ENCODE measurements at regions of chr13 and their contacts with region 1.

Region 1: GRCh38 chr13:77599351-77599750 is 63.8 kb downstream of the SCEL start:
- DNase-seq: no peak
- ATAC-seq: no peak
- H3K4me3 Mint-ChIP-seq: no peak overlapping the region
- H3K27ac Mint-ChIP-seq: no peak overlapping the region
- H3K4me1 Mint-ChIP-seq: no peaks in the 10 kb centered on the region
- H3K27me3 Mint-ChIP-seq: peaks cover 11% of the 10 kb centered on the region

Region 2: GRCh38 chr13:77751513-77752456 is 152.4 kb after region 1 on chr13:
- CTCF ChIA-PET with region 1: interaction called, 64 read pairs
- POLR2A ChIA-PET with region 1: no interaction called
- intact Hi-C with region 1: no loop called
- DNase-seq: peak; percentile 60
- ATAC-seq: peak; percentile 90
- H3K4me3 Mint-ChIP-seq: no peak overlapping the region
- H3K27ac Mint-ChIP-seq: peak overlapping the region; percentile 28
- H3K4me1 Mint-ChIP-seq: peaks cover 18% of the 10 kb centered on the region
- H3K27me3 Mint-ChIP-seq: no peaks in the 10 kb centered on the region

Region 3: GRCh38 chr13:78045916-78046315 is 446.6 kb after region 1 on chr13:
- CTCF ChIA-PET with region 1: no interaction called
- POLR2A ChIA-PET with region 1: no interaction called
- intact Hi-C with region 1: no loop called
- DNase-seq: no peak
- ATAC-seq: no peak
- H3K4me3 Mint-ChIP-seq: no peak overlapping the region
- H3K27ac Mint-ChIP-seq: no peak overlapping the region
- H3K4me1 Mint-ChIP-seq: no peaks in the 10 kb centered on the region
- H3K27me3 Mint-ChIP-seq: no peaks in the 10 kb centered on the region

Region 4: GRCh38 chr13:78121459-78122348 is 522.4 kb after region 1 on chr13:
- CTCF ChIA-PET with region 1: no interaction called
- POLR2A ChIA-PET with region 1: no interaction called
- intact Hi-C with region 1: loop called (anchors 5 to 10 kb)
- DNase-seq: peak; percentile 46
- ATAC-seq: no peak
- H3K4me3 Mint-ChIP-seq: no peak overlapping the region
- H3K27ac Mint-ChIP-seq: no peak overlapping the region
- H3K4me1 Mint-ChIP-seq: no peaks in the 10 kb centered on the region
- H3K27me3 Mint-ChIP-seq: peaks cover 12% of the 10 kb centered on the region